Transverse colon (tissue), 4 donors: ENCODE measurements at regions of chr12 and their contacts with region 1.

Region 1: GRCh38 chr12:4276524-4277204 is 3.1 kb downstream of the CCND2 start:
- DNase-seq: peak; percentile 90
- H3K4me3 ChIP-seq: peak overlapping the region in 2 of 4 donors; percentile 71 to 83
- H3K27ac ChIP-seq: peak overlapping the region; percentile 92 to 97 (median 95)
- H3K4me1 ChIP-seq: peaks cover 38 to 77% (median 74%) of the 10 kb centered on the region in 4 donors
- H3K27me3 ChIP-seq: no peaks in the 10 kb centered on the region
- CTCF ChIP-seq: peak; percentile 89 to 98 (median 93)
- EP300 ChIP-seq: no peak
- POLR2A ChIP-seq: no peak

Region 2: GRCh38 chr12:3885277-3886094 is 391.2 kb before region 1 on chr12:
- in situ Hi-C with region 1: loop called in 3 of 4 experiments (anchors 5 to 25 kb)
- intact Hi-C with region 1: no loop called
- DNase-seq: no peak
- H3K4me3 ChIP-seq: peak overlapping the region in 3 of 4 donors; percentile 16 to 46 (median 19)
- H3K27ac ChIP-seq: peak overlapping the region; percentile 59 to 67 (median 64)
- H3K4me1 ChIP-seq: peaks cover 0 to 9% (median 2%) of the 10 kb centered on the region in 4 donors
- H3K27me3 ChIP-seq: peaks cover 8% of the 10 kb centered on the region
- CTCF ChIP-seq: peak; percentile 77 to 90 (median 82)
- EP300 ChIP-seq: no peak
- POLR2A ChIP-seq: no peak

Region 3: GRCh38 chr12:4030929-4031702 is 245.5 kb before region 1 on chr12:
- in situ Hi-C with region 1: loop called in 1 of 4 experiments (anchors 10 kb)
- intact Hi-C with region 1: loop called (anchors 5 kb)
- DNase-seq: peak; percentile 92
- H3K4me3 ChIP-seq: peak overlapping the region; percentile 42 to 56 (median 45)
- H3K27ac ChIP-seq: peak overlapping the region; percentile 84 to 88 (median 86)
- H3K4me1 ChIP-seq: peaks cover 8 to 21% (median 13%) of the 10 kb centered on the region in 4 donors
- H3K27me3 ChIP-seq: no peaks in the 10 kb centered on the region
- CTCF ChIP-seq: no peak
- EP300 ChIP-seq: no peak
- POLR2A ChIP-seq: peak; percentile 45

Region 4: GRCh38 chr12:4112734-4113325 is 163.8 kb before region 1 on chr12:
- in situ Hi-C with region 1: loop called (anchors 5 to 25 kb)
- intact Hi-C with region 1: no loop called
- DNase-seq: no peak
- H3K4me3 ChIP-seq: no peak overlapping the region
- H3K27ac ChIP-seq: no peak overlapping the region
- H3K4me1 ChIP-seq: peaks cover 19 to 26% (median 22%) of the 10 kb centered on the region in 4 donors
- H3K27me3 ChIP-seq: no peaks in the 10 kb centered on the region
- CTCF ChIP-seq: no peak
- EP300 ChIP-seq: no peak
- POLR2A ChIP-seq: no peak

Region 5: DNA sequence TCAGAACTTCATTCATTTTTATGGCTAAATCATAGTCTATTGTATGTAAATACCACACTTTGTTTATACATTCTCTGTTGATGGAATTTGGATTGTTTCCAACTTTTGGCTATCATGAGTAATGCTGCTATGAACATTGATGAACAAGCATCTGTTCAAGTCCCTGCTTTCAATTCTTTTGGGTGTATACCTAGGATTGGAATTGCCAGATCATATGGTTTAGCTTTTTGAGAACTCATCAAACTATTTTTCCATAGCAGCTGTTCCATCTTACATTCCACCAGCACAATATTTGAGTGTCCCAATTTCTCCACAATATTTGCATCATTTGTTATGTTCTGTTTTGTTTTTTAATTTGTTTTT is 55.4 kb before region 1 on chr12:
- in situ Hi-C with region 1: no loop called
- intact Hi-C with region 1: no loop called
- DNase-seq: no peak
- H3K4me3 ChIP-seq: no peak overlapping the region
- H3K27ac ChIP-seq: no peak overlapping the region
- H3K4me1 ChIP-seq: no peaks in the 10 kb centered on the region
- H3K27me3 ChIP-seq: peaks cover 5% of the 10 kb centered on the region
- CTCF ChIP-seq: no peak
- EP300 ChIP-seq: no peak
- POLR2A ChIP-seq: no peak

Region 6: GRCh38 chr12:4496145-4496838 is 219.6 kb after region 1 on chr12:
- in situ Hi-C with region 1: no loop called
- intact Hi-C with region 1: no loop called
- DNase-seq: no peak
- H3K4me3 ChIP-seq: no peak overlapping the region
- H3K27ac ChIP-seq: no peak overlapping the region
- H3K4me1 ChIP-seq: no peaks in the 10 kb centered on the region
- H3K27me3 ChIP-seq: no peaks in the 10 kb centered on the region
- CTCF ChIP-seq: no peak
- EP300 ChIP-seq: no peak
- POLR2A ChIP-seq: no peak